ENCODE measurements at regions of chr1 and their contacts with region 1.

Region 1: GRCh38 chr1:158203693-158204457 is 23.2 kb downstream of the CD1D start:
- DNase-seq: peak in 7 of 9 donors; percentile 9 to 49 (median 44)
- ATAC-seq: peak; percentile 76
- H3K4me3 ChIP-seq: no peak overlapping the region
- H3K4me3 Mint-ChIP-seq: peak overlapping the region in 5 of 10 donors; percentile 2 to 56 (median 32)
- H3K27ac ChIP-seq: no peak overlapping the region
- H3K27ac Mint-ChIP-seq: no peak overlapping the region
- H3K4me1 ChIP-seq: peaks cover 3 to 7% of the 10 kb centered on the region in 2 donors
- H3K4me1 Mint-ChIP-seq: peaks cover 8 to 18% (median 14%) of the 10 kb centered on the region in 7 donors
- H3K27me3 ChIP-seq: no peaks in the 10 kb centered on the region
- H3K27me3 Mint-ChIP-seq: peaks cover 32 to 51% (median 44%) of the 10 kb centered on the region in 5 donors

Region 2: DNA sequence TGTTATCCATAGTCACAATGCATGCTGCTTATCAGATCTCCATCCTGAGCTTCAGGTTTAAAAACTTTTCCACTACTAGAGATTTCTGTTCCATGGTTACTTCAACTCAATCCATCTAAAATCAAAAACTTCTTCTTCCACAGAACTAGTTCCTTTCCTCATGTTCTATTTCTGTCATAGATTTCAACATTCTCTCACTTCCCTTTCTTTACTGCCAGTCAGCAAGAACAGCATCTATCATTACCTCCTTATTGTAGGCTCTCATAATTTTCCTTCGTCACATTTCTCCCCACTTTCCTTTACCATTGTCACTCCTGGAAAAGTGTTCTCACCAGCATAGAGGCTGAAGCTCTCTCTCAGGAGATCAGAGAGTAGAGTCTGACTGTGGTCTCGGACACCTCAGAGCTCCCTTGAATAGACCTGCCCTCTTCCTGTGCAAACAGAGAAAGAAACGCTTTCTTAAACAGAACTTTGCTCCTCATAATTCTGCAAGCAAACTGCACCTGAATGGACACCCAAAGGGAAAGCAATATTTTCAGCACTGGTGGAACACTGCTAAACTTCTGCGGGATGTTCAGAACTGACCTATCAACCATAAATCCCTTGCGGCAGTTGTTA is 259.1 kb before region 1 on chr1:
- CTCF ChIA-PET with region 1: no interaction called
- POLR2A ChIA-PET with region 1: no interaction called
- intact Hi-C with region 1: no loop called
- DNase-seq: no peak
- ATAC-seq: no peak
- H3K4me3 ChIP-seq: no peak overlapping the region
- H3K4me3 Mint-ChIP-seq: no peak overlapping the region
- H3K27ac ChIP-seq: no peak overlapping the region
- H3K27ac Mint-ChIP-seq: peak overlapping the region in 1 of 9 donors; percentile 1
- H3K4me1 ChIP-seq: no peaks in the 10 kb centered on the region
- H3K4me1 Mint-ChIP-seq: peaks cover 0 to 5% (median 0%) of the 10 kb centered on the region in 7 donors
- H3K27me3 ChIP-seq: no peaks in the 10 kb centered on the region
- H3K27me3 Mint-ChIP-seq: peaks cover 0 to 19% (median 8%) of the 10 kb centered on the region in 5 donors

Region 3: GRCh38 chr1:158329733-158330132 is 125.9 kb after region 1 on chr1:
- CTCF ChIA-PET with region 1: no interaction called
- POLR2A ChIA-PET with region 1: no interaction called
- intact Hi-C with region 1: loop called (anchors 2 to 5 kb)
- DNase-seq: peak in 1 of 9 donors; percentile 15
- ATAC-seq: no peak
- H3K4me3 ChIP-seq: no peak overlapping the region
- H3K4me3 Mint-ChIP-seq: no peak overlapping the region
- H3K27ac ChIP-seq: no peak overlapping the region
- H3K27ac Mint-ChIP-seq: no peak overlapping the region
- H3K4me1 ChIP-seq: no peaks in the 10 kb centered on the region
- H3K4me1 Mint-ChIP-seq: peaks cover 0 to 16% (median 10%) of the 10 kb centered on the region in 7 donors
- H3K27me3 ChIP-seq: no peaks in the 10 kb centered on the region
- H3K27me3 Mint-ChIP-seq: peaks cover 0 to 23% (median 14%) of the 10 kb centered on the region in 5 donors

Region 4: DNA sequence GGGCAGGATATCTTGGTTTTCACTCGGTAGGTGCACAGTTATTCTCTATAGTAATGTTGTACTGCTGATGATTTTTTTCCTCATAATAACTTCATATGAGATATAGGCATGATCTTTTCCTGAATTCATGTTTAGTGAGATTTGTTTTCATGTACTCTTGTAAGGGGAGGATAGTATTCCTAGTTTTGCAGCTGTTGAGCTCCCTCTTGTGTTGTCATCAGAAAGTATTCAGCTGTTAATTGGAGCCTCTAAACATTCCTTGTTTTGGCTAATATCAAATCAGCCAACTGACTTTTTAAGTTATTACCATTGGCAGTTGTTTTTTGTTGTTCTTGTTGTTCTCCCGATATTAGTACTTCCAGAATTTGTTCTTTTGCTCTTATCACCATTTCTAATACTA is 292.5 kb after region 1 on chr1:
- CTCF ChIA-PET with region 1: no interaction called
- POLR2A ChIA-PET with region 1: no interaction called
- intact Hi-C with region 1: loop called in 1 of 2 experiments (anchors 5 kb)
- DNase-seq: no peak
- ATAC-seq: no peak
- H3K4me3 ChIP-seq: no peak overlapping the region
- H3K4me3 Mint-ChIP-seq: no peak overlapping the region
- H3K27ac ChIP-seq: no peak overlapping the region
- H3K27ac Mint-ChIP-seq: no peak overlapping the region
- H3K4me1 ChIP-seq: no peaks in the 10 kb centered on the region
- H3K4me1 Mint-ChIP-seq: no peaks in the 10 kb centered on the region
- H3K27me3 ChIP-seq: no peaks in the 10 kb centered on the region
- H3K27me3 Mint-ChIP-seq: peaks cover 25 to 37% (median 27%) of the 10 kb centered on the region in 5 donors

Region 5: DNA sequence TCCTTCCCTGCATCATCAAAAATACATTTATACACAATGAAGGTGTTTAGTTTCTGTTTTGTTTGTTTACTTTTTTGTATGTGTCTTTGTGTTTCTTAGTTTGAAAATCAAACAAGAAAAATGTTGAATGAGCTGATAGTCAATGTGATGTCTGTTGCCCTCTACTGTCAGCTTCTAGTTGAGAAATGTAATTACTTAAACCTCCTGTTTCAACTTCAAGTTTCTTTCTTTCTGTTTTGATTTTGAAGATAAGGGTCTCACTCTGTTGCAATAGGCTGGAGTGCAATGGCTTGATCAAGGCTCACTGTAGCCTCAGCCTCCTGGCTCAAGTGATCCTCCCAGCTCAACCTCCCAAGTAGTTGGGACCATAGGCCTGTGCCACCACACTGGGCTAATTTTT is 445.2 kb after region 1 on chr1:
- CTCF ChIA-PET with region 1: no interaction called
- POLR2A ChIA-PET with region 1: no interaction called
- intact Hi-C with region 1: loop called in 1 of 2 experiments (anchors 10 kb)
- DNase-seq: no peak
- ATAC-seq: no peak
- H3K4me3 ChIP-seq: no peak overlapping the region
- H3K4me3 Mint-ChIP-seq: no peak overlapping the region
- H3K27ac ChIP-seq: no peak overlapping the region
- H3K27ac Mint-ChIP-seq: no peak overlapping the region
- H3K4me1 ChIP-seq: peaks cover 0 to 5% of the 10 kb centered on the region in 2 donors
- H3K4me1 Mint-ChIP-seq: peaks cover 0 to 25% (median 13%) of the 10 kb centered on the region in 7 donors
- H3K27me3 ChIP-seq: no peaks in the 10 kb centered on the region
- H3K27me3 Mint-ChIP-seq: peaks cover 0 to 9% (median 0%) of the 10 kb centered on the region in 5 donors